A549 (cell line): ENCODE measurements at regions of chr11 and their contacts with region 1.

Region 1: GRCh38 chr11:46308631-46309419 is 31.4 kb downstream of the CREB3L1 start:
- DNase-seq: peak; percentile 80 to 91
- ATAC-seq: peak; percentile 90 to 95
- H3K4me3 ChIP-seq: no peak overlapping the region
- H3K27ac ChIP-seq: peak overlapping the region in 1 of 2 experiments; percentile 44; a peak in 1 of 6 replicates
- H3K4me1 ChIP-seq: peaks cover 20% of the 10 kb centered on the region
- CTCF ChIP-seq: peak; percentile 90
- EP300 ChIP-seq: no peak
- POLR2A ChIP-seq: no peak
- RAD21 ChIP-seq: peak; percentile 93 to 94

Region 2: GRCh38 chr11:46160100-46160499 is 148.7 kb before region 1 on chr11:
- CTCF ChIA-PET with region 1: no interaction called
- POLR2A ChIA-PET with region 1: no interaction called
- DNase-seq: peak in 1 of 2 experiments; percentile 25
- ATAC-seq: peak; percentile 44 to 47; a peak in 4 of 6 replicates
- H3K4me3 ChIP-seq: no peak overlapping the region
- H3K27ac ChIP-seq: no peak overlapping the region
- H3K4me1 ChIP-seq: no peaks in the 10 kb centered on the region
- CTCF ChIP-seq: no peak
- EP300 ChIP-seq: no peak
- POLR2A ChIP-seq: no peak
- RAD21 ChIP-seq: no peak

Region 3: GRCh38 chr11:46272816-46273427 is 35.9 kb before region 1 on chr11:
- CTCF ChIA-PET with region 1: interaction called, 67 read pairs
- POLR2A ChIA-PET with region 1: no interaction called
- DNase-seq: no peak
- ATAC-seq: peak in 1 of 2 experiments; percentile 35; a peak in 3 of 6 replicates
- H3K4me3 ChIP-seq: no peak overlapping the region
- H3K27ac ChIP-seq: peak overlapping the region in 1 of 2 experiments; percentile 39; a peak in 2 of 6 replicates
- H3K4me1 ChIP-seq: peaks cover 45% of the 10 kb centered on the region
- CTCF ChIP-seq: no peak
- EP300 ChIP-seq: no peak
- POLR2A ChIP-seq: no peak
- RAD21 ChIP-seq: no peak

Region 4: DNA sequence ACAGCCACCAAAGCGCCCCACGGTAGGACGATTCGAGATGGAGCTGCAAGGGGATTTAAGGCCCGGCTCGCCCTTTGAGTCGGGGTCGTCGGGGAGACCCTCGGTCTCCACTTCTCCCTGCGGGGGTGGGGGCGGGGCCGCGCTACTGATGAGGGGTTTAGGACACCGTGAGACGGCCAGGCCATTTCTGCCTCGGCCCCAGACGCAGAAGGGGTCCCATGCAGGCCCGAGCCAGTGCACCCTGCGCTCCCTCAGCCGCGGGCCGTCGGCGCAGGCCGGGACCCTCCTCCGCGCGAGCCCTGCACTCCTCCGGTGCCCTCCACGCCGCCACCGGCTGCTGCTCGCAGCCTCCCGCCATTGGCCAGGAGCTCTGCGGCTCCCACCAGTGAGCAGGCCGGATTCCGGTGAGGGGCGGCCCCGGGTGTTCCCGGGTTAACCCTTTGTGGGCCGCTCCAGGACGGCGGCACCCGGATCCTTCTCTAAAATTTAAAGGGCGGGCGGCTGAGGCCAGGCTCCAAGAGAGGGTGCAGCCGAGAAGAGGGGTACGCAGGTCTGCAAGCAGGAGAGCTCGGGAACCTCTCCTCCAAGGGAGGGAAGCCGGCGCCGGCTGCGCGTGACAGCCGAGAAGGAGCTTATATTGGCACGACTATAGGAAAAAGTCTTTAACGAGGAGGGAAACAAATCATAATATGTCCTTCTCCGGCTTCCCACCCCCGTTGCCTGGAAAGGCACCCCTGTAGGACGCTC is 13.3 kb before region 1 on chr11:
- CTCF ChIA-PET with region 1: interaction called, 321 read pairs
- POLR2A ChIA-PET with region 1: interaction called, 3 read pairs
- DNase-seq: no peak
- ATAC-seq: peak; percentile 32 to 76; a peak in 4 of 6 replicates
- H3K4me3 ChIP-seq: peak overlapping the region; percentile 38
- H3K27ac ChIP-seq: peak overlapping the region; percentile 48 to 84; a peak in 5 of 6 replicates
- H3K4me1 ChIP-seq: peaks cover 70% of the 10 kb centered on the region
- CTCF ChIP-seq: no peak
- EP300 ChIP-seq: no peak
- POLR2A ChIP-seq: peak; percentile 50
- RAD21 ChIP-seq: no peak

Region 5: DNA sequence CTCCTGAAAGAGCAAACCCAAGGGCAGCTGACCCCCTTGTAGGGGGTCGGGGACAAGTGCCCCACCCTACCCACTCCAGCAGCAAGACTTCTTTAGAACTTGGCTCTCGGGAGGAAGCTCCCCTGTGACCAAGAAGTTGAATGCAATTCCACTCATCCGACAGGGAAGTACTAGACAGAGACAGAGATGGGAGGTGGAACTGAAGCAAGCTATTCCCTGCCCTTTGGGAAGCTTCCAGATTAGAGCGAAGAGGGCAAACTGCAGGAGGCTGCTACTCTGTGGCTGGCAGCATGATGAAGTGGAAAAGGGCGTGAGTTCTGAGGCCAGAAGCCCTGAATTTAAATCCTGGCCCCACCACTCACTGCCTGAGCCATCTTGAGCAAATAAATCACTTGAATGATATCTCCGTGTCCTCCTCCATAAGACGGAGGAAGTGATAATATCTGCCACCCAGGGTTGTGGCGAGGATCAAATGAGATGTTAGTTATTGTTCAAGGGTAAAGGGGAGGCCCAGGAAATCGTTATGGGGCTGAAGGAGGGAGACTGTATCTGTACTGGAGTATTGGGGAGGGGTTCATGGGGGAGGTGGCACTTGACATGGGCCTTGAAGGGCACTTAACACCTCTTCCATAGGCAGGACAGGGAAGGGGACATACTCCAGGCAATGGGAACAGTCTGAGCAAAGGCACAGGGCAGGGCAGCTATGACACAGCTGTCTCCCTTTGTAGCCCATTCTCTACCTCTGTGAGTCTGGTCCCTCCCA is 22.2 kb after region 1 on chr11:
- CTCF ChIA-PET with region 1: interaction called, 27 read pairs
- POLR2A ChIA-PET with region 1: no interaction called
- DNase-seq: no peak
- ATAC-seq: no peak
- H3K4me3 ChIP-seq: no peak overlapping the region
- H3K27ac ChIP-seq: no peak overlapping the region
- H3K4me1 ChIP-seq: no peaks in the 10 kb centered on the region
- CTCF ChIP-seq: no peak
- EP300 ChIP-seq: no peak
- POLR2A ChIP-seq: no peak
- RAD21 ChIP-seq: no peak

Region 6: GRCh38 chr11:46346886-46347636 is 38.2 kb after region 1 on chr11 and contains the start of gene DGKZ:
- CTCF ChIA-PET with region 1: interaction called, 12 read pairs
- POLR2A ChIA-PET with region 1: interaction called, 3 read pairs
- DNase-seq: peak; percentile 81 to 82
- ATAC-seq: peak; percentile 83 to 85
- H3K4me3 ChIP-seq: peak within 1 kb of the TSS; percentile 84
- H3K27ac ChIP-seq: peak within 1 kb of the TSS; percentile 77 to 96
- H3K4me1 ChIP-seq: peaks cover 16% of the 10 kb centered on the region
- CTCF ChIP-seq: peak; percentile 98
- EP300 ChIP-seq: no peak
- POLR2A ChIP-seq: peak; percentile 49
- RAD21 ChIP-seq: peak; percentile 17 to 52; a peak in 3 of 5 replicates
- polyA plus RNA-seq, gene DGKZ: 12.8 and 14.5 TPM in 2 replicates

Region 7: DNA sequence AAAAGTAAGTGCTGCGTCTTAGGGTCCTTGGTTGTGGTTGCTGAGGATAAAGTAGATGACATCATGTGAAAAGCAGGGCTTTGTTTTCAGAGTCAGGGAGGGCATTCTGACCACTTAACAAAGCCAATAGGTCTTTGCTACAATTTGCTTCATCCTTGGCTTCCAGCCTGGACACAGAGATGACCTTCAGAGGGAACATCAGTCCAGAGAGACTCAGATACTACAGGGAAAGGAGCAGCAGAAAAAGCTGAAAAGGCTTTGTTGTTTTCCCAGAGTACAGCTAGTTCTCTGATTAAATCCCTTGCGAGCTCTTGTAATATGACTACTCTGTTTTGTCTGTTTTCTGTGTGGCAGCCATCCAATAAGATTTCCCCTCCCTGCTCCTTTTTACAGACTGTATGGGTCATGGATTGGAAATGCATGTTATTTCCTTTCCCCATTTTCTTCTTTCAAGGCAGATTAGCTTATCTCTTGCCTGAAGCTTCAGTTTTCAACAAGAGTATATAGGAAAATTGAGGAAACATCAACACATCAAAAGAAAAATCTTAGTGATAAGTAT is 340.4 kb after region 1 on chr11:
- CTCF ChIA-PET with region 1: no interaction called
- POLR2A ChIA-PET with region 1: no interaction called
- DNase-seq: peak in 1 of 2 experiments; percentile 27
- ATAC-seq: peak in 1 of 2 experiments; percentile 74; a peak in 4 of 6 replicates
- H3K4me3 ChIP-seq: no peak overlapping the region
- H3K27ac ChIP-seq: peak overlapping the region in 1 of 2 experiments; percentile 30; a peak in 2 of 6 replicates
- H3K4me1 ChIP-seq: 0 out of 3 replicates have a peak, but pooled peaks cover 3% of the 10 kb centered on the region
- CTCF ChIP-seq: no peak
- EP300 ChIP-seq: no peak
- POLR2A ChIP-seq: no peak
- RAD21 ChIP-seq: no peak